PC-9 (cell line): ENCODE measurements at regions of chr3 and their contacts with region 1.

Region 1: DNA sequence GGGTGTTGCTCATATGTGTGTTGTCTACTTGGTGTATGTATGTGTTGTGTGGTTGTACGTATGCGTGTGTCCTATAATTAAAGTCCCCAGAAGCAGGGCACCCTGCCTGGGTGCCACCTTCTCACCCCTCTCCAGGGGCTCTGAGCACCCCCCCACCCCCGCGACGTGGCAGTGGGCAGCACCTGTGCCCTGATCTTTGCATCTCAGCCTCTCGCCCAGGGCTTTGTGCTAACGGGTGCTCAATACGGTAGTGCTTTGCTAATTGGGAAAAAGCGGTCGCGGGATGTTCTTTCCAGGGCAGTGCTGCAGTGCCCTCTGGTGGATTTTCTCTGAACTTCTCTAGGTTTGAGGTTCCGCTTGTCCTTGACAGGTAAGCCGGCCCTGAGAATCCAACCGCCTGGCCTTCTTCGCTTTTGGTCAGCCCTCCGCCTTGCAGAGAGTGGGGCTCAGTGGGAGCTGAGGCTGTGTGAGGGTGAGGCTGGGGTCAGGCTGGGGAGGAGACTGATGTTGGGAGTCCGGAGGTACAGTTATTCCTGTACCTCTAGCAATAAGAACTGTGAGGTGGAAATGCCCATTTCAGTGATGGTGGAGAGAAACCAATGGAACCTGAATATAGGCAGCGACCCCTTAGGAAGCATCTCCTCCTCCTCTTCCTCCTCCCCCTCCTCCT is 17.6 kb upstream of the EPHB3 start:
- DNase-seq: peak; percentile 83 to 89
- H3K4me3 ChIP-seq: no peak overlapping the region
- H3K27ac ChIP-seq: no peak overlapping the region
- H3K4me1 ChIP-seq: no peaks in the 10 kb centered on the region
- H3K27me3 ChIP-seq: peaks cover 50% of the 10 kb centered on the region
- CTCF ChIP-seq: peak; percentile 97

Region 2: DNA sequence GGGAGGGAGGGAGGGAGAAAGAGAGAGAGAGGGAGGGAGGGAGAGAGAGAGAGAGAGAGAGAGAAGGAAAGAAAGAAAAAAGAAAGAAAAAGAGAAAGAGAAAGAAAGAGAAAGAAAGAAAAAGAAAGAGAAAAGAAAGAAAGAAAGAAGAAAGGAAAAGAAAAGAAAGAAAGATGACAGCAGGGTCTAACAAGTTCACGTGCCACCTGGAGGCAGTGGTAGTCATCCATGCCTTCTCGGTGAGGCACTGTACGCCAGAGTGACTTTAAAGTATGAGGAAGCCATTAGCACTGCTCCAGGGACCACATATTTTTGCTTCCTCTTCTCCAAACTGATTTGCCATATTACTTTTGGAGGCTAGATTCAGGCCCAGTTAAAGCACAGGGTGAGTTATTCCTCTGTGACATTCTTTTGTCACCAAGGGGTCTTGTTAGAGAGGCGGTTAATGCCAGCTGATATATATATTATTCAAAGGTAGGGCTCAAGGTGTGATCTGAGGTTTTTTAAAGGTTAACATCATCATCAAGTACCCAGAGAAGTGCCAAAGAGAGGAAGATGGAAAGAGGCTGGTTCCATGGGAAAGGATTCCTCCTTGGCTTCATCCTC is 512.7 kb before region 1 on chr3 and contains the start of gene HTR3D:
- CTCF ChIA-PET with region 1: interaction called, 10 read pairs
- POLR2A ChIA-PET with region 1: no interaction called
- intact Hi-C with region 1: no loop called
- DNase-seq: peak; percentile 43 to 83
- H3K4me3 ChIP-seq: no peak within 1 kb of the TSS
- H3K27ac ChIP-seq: no peak within 1 kb of the TSS
- H3K4me1 ChIP-seq: no peaks in the 10 kb centered on the region; the same call in 1 of the 2 replicates
- H3K27me3 ChIP-seq: no peaks in the 10 kb centered on the region
- CTCF ChIP-seq: no peak
- total RNA-seq, gene HTR3D: not detected in 2 replicates

Region 3: GRCh38 chr3:184250167-184250828 is 293.7 kb before region 1 on chr3:
- CTCF ChIA-PET with region 1: interaction called, 3 read pairs
- POLR2A ChIA-PET with region 1: no interaction called
- intact Hi-C with region 1: loop called (anchors 5 kb)
- DNase-seq: peak; percentile 92 to 97
- H3K4me3 ChIP-seq: peak overlapping the region; percentile 96
- H3K27ac ChIP-seq: peak overlapping the region; percentile 90
- H3K4me1 ChIP-seq: peaks cover 18% of the 10 kb centered on the region
- H3K27me3 ChIP-seq: no peaks in the 10 kb centered on the region
- CTCF ChIP-seq: peak; percentile 97

Region 4: GRCh38 chr3:184289426-184289938 is 254.5 kb before region 1 on chr3:
- CTCF ChIA-PET with region 1: no interaction called
- POLR2A ChIA-PET with region 1: no interaction called
- intact Hi-C with region 1: no loop called
- DNase-seq: peak; percentile 63 to 75
- H3K4me3 ChIP-seq: no peak overlapping the region
- H3K27ac ChIP-seq: no peak overlapping the region
- H3K4me1 ChIP-seq: no peaks in the 10 kb centered on the region
- H3K27me3 ChIP-seq: no peaks in the 10 kb centered on the region; the same call in 1 of the 2 replicates
- CTCF ChIP-seq: peak; percentile 81

Region 5: DNA sequence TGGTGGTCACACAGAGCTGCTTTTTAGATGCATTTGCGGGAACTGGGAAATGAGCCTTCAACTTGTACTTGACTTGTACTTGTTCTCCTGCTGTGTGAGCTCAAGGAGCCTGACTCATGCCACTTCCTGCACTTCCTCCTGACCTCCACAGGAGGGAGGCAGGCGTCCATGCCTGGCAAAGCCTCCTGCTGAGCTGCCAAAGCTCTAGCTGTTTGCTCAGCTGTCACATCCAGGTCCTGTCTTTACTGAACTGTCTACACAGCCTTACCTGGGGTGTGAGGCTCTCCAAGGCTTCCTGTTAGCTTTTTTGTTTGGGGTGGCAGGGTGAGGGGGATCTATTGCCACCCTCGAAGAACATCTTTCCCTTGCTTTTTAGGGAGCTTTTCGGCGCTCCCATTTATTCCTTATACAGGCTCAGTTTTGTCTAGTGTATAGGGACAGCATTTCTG is 172.4 kb before region 1 on chr3:
- CTCF ChIA-PET with region 1: interaction called, 75 read pairs
- POLR2A ChIA-PET with region 1: no interaction called
- intact Hi-C with region 1: loop called (anchors 1 kb)
- DNase-seq: peak; percentile 84 to 89
- H3K4me3 ChIP-seq: no peak overlapping the region
- H3K27ac ChIP-seq: no peak overlapping the region
- H3K4me1 ChIP-seq: no peaks in the 10 kb centered on the region
- H3K27me3 ChIP-seq: peaks cover 35% of the 10 kb centered on the region
- CTCF ChIP-seq: peak; percentile 99

Region 6: DNA sequence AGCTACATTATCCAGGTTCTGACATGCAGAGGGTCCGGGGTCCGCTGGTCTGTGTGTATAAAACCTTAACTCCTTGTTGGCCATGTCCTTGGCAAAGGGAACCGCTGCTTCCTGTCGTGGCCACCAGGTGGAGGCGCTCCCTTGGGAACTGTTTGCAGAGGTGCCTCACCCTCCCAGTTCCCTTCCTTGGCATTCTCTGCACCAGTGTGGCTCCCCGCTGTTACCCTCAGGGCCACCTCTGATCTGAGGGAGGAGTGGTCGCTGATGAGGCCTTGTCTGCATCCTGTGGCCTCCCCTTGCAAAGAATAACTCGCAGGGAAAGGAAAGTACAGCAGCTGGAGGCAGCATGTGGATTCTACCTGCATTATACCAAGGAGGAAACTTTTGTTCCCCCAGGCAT is 74.6 kb before region 1 on chr3:
- CTCF ChIA-PET with region 1: interaction called, 9 read pairs
- POLR2A ChIA-PET with region 1: interaction called, 3 read pairs
- intact Hi-C with region 1: loop called (anchors 1 kb)
- DNase-seq: peak in 1 of 2 experiments; percentile 56
- H3K4me3 ChIP-seq: no peak overlapping the region
- H3K27ac ChIP-seq: no peak overlapping the region
- H3K4me1 ChIP-seq: no peaks in the 10 kb centered on the region
- H3K27me3 ChIP-seq: peaks cover 35% of the 10 kb centered on the region
- CTCF ChIP-seq: peak; percentile 90

Region 7: GRCh38 chr3:184777336-184778004 is 233.5 kb after region 1 on chr3:
- CTCF ChIA-PET with region 1: interaction called, 3 read pairs
- POLR2A ChIA-PET with region 1: no interaction called
- intact Hi-C with region 1: loop called (anchors 5 kb)
- DNase-seq: peak; percentile 88 to 92
- H3K4me3 ChIP-seq: no peak overlapping the region
- H3K27ac ChIP-seq: no peak overlapping the region
- H3K4me1 ChIP-seq: no peaks in the 10 kb centered on the region
- H3K27me3 ChIP-seq: peaks cover 18% of the 10 kb centered on the region
- CTCF ChIP-seq: peak; percentile 98

Region 8: DNA sequence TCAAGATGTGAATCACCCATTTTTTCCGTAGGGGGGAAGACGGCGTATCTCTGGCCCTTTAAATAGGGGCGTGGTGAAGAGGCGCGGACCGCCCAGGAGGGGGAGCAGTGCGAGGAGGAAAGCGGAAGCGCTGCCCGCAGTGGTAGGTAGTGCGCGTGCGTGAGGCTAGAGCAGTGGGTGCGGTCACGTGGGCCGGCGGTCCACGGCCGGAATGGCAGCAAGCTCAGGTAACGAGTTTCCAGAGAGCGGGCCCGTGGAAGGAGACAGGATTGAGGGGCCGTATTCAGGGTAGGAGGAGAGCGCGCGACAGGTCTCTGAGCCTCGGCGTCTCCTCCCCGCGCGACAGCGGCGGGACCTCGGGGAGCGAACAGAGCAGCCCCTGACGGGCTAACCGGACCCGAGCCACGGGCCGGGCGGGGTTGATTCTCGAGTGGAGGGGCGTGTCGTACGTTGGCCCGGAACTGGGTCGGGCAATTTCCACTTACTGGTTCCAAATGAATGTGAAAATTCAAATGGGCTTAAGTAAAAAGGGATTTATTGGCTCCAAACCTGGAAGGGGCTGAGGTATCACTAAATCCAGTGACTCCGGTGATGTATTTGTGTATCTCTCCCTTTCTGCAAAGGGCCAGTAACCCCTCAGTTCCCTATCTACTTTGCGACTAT is 268.2 kb after region 1 on chr3 and contains the start of gene VPS8:
- CTCF ChIA-PET with region 1: no interaction called
- POLR2A ChIA-PET with region 1: no interaction called
- intact Hi-C with region 1: no loop called
- DNase-seq: peak; percentile 92 to 99
- H3K4me3 ChIP-seq: peak within 1 kb of the TSS; percentile 89
- H3K27ac ChIP-seq: no peak within 1 kb of the TSS
- H3K4me1 ChIP-seq: peaks cover 17% of the 10 kb centered on the region
- H3K27me3 ChIP-seq: no peaks in the 10 kb centered on the region
- CTCF ChIP-seq: peak; percentile 80
- total RNA-seq, gene VPS8: 71.8 and 80.8 TPM in 2 replicates